ENCODE measurements at regions of chr20 and their contacts with region 1.

Region 1: DNA sequence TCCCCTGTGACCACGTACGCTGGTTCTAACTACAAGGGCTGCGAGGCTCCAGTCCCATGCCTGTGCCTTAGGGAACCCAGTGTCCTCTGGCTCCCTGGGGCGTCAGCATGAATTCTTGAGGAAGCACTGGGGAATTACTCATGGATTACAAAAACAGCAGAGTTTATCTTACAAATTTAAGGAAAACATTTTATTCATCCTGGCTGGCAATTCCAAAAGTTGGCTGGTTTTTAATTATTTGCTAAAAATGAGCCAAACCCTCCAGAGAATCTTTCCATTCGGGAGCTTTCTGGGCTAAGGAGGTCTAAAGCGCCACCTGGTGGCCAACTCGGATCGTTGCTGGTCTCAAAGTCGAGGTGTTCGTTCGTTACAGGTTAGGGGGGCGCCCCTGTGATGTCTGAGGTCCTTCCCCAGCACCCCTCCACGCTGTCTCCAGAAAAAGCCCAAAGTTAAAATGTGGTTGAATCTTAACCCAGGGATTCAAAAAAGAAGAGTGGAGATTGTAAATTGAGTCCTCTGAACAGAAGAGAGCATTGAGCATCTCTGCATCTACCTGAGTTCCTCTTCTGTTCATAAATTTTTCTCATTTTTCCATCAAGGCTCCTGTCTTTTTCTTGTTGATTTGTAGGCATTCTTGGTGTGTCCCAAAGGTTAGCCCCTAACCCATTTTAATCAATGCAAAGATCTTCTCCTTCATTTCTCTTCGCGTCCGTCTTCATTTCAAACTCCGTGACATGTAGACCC is 99.4 kb downstream of the BFSP1 start:
- DNase-seq: peak; percentile 49 to 65 (median 63)
- ATAC-seq: peak; percentile 74
- H3K4me3 ChIP-seq: no peak overlapping the region
- H3K27ac ChIP-seq: no peak overlapping the region
- H3K4me1 ChIP-seq: peaks cover 0 to 4% of the 10 kb centered on the region in 2 experiments; a peak in 1 of 5 replicates
- H3K27me3 ChIP-seq: peaks cover 0 to 8% of the 10 kb centered on the region in 2 experiments; a peak in 1 of 5 replicates
- CTCF ChIP-seq: peak; percentile 61 to 71 (median 64)
- EP300 ChIP-seq: no peak
- POLR2A ChIP-seq: no peak
- RAD21 ChIP-seq: peak; percentile 38 to 65

Region 2: DNA sequence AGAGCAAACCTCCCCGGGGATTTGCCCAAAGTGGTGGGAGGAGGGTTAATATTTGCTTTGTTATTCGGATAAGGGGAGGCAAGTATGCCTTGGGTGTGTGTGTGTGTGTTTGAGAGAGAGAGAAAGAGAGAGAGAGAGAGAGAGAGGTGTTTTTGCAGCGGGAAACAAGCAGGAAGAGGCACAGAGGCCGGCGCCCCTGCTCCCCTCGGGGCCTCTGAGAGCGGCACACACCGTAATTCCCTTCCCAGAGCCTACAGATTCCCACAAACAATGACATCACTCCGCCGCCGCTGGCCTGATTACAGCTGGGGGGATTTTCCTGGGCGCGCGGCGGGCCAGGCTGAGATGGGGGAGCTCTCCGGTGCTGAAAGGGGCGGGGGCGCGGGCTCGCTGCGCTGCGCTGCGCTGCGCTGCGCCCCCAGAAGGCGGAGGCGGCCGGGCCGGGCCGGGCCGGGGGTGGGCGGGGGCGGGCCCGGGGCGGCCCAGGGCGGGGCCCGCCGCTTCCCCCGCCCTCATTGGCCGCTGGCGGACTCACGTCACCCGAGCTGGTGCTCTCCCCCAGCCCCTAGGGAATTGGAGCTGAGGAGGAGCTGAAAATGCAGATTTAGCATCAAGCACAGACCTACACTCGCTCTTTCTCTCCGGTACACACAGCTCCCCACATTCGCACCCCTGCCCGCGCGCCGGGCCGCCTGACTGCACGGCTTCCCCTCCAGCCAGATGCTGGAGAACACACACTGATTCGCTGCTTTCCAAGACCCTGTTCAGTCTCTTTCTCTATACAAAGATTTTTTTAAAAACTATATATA is 205.2 kb before region 1 on chr20 and contains the start of gene PCSK2:
- CTCF ChIA-PET with region 1: no interaction called
- POLR2A ChIA-PET with region 1: no interaction called
- in situ Hi-C with region 1: no loop called
- intact Hi-C with region 1: loop called (anchors 10 kb)
- DNase-seq: peak; percentile 27 to 72 (median 53)
- ATAC-seq: peak; percentile 88
- H3K4me3 ChIP-seq: no peak within 1 kb of the TSS
- H3K27ac ChIP-seq: no peak within 1 kb of the TSS
- H3K4me1 ChIP-seq: peaks cover 0 to 5% of the 10 kb centered on the region in 2 experiments; a peak in 2 of 5 replicates
- H3K27me3 ChIP-seq: peaks cover 0 to 11% of the 10 kb centered on the region in 2 experiments; a peak in 2 of 5 replicates
- CTCF ChIP-seq: no peak
- EP300 ChIP-seq: no peak
- POLR2A ChIP-seq: no peak
- RAD21 ChIP-seq: no peak
- polyA plus RNA-seq, gene PCSK2: not detected

Region 3: GRCh38 chr20:17693444-17694001 is 261.7 kb after region 1 on chr20:
- CTCF ChIA-PET with region 1: no interaction called
- POLR2A ChIA-PET with region 1: no interaction called
- in situ Hi-C with region 1: no loop called
- intact Hi-C with region 1: no loop called
- DNase-seq: no peak
- ATAC-seq: no peak
- H3K4me3 ChIP-seq: no peak overlapping the region
- H3K27ac ChIP-seq: no peak overlapping the region
- H3K4me1 ChIP-seq: no peaks in the 10 kb centered on the region; a peak in 1 of 5 replicates
- H3K27me3 ChIP-seq: peaks cover 2 to 25% of the 10 kb centered on the region in 2 experiments; a peak in 4 of 5 replicates
- CTCF ChIP-seq: no peak
- EP300 ChIP-seq: no peak
- POLR2A ChIP-seq: no peak
- RAD21 ChIP-seq: no peak